ENCODE measurements at regions of chr3 and their contacts with region 1.

Region 1: DNA sequence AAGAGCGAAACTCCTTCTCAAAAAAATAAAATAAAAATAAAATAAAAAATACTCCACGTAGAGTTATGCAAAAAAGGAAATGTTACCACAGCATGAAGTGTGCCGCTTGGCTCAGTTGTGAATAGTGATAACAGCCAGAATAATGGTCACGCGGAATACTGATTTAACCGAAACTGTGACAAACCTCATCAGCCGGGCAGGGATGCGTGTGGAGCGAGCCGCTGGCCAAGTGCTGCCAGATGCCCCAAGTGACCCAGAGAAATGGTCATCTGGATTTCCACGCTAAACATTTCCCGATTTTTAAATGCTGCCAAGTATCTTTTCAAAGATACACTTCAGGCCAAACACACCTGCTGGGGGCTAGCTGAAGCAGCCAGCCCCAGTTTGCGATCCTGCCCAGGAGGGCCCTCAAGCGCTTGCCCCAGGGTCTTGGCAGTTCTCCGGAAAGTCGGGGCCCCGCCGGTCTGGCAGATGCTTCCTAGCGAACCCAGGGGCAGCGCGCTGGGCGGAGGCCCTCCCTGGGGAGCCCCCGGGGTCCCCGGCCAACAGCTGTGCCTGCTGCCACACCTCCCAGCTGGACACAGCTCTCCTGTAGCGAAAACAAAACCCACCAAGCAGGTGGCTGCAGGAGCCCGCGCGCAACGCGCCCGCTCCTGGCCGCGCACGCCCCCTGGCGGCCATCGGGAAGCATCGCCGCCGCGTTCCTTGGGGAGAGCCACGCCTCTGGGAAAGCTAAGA is 35.1 kb downstream of the CMTM6 start:
- DNase-seq: peak; percentile 70
- H3K4me3 Mint-ChIP-seq: no peak overlapping the region
- H3K27ac Mint-ChIP-seq: no peak overlapping the region
- H3K4me1 Mint-ChIP-seq: peaks cover 47% of the 10 kb centered on the region
- H3K27me3 Mint-ChIP-seq: no peaks in the 10 kb centered on the region

Region 2: DNA sequence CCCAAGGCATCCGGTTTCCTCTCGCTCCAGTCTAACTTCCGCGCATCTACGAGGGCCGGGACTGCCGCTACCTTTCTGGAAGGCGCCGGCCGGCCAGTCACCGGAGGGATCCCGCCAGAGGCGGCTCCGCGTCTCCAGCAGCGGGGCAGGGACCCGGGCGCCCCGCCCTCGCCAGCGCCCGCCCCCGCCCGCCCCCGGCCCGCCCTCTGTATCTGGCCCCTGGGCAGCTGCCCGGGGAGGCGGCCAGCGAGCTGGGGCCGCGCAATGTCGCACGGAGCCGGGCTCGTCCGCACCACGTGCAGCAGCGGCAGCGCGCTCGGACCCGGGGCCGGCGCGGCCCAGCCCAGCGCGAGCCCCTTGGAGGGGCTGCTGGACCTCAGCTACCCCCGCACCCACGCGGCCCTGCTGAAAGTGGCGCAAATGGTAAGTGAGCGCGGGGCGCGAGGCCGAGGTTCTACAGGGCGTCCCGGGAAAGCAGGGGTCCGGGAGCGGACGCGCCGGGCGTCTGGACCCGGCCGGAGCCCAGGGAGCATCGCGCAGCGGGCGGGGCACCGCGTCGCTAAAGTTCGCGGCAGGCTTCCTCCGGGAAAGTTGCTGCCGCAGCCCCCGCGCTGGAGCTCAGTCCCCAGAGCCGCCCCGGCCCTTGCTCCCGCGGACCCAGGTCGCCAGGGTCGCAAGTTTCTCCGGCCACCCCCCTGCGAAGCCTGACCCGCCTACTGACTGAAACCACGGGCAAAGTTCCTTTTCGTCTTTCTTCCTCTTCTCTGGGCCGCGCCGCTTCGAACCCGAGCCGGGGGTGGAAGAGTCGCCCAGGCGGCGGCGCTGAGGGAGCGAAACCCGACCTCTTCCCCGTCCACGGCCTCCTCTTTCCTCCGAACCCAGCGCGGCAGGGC is 75.6 kb before region 1 on chr3 and contains the start of gene CMTM7:
- CTCF ChIA-PET with region 1: interaction called, 10 read pairs
- POLR2A ChIA-PET with region 1: no interaction called
- DNase-seq: peak; percentile 75
- H3K4me3 Mint-ChIP-seq: peak within 1 kb of the TSS; percentile 94
- H3K27ac Mint-ChIP-seq: peak within 1 kb of the TSS; percentile 95
- H3K4me1 Mint-ChIP-seq: peaks cover 61% of the 10 kb centered on the region
- H3K27me3 Mint-ChIP-seq: no peaks in the 10 kb centered on the region
- total RNA-seq, gene CMTM7: 45.9 to 62.6 TPM

Region 3: DNA sequence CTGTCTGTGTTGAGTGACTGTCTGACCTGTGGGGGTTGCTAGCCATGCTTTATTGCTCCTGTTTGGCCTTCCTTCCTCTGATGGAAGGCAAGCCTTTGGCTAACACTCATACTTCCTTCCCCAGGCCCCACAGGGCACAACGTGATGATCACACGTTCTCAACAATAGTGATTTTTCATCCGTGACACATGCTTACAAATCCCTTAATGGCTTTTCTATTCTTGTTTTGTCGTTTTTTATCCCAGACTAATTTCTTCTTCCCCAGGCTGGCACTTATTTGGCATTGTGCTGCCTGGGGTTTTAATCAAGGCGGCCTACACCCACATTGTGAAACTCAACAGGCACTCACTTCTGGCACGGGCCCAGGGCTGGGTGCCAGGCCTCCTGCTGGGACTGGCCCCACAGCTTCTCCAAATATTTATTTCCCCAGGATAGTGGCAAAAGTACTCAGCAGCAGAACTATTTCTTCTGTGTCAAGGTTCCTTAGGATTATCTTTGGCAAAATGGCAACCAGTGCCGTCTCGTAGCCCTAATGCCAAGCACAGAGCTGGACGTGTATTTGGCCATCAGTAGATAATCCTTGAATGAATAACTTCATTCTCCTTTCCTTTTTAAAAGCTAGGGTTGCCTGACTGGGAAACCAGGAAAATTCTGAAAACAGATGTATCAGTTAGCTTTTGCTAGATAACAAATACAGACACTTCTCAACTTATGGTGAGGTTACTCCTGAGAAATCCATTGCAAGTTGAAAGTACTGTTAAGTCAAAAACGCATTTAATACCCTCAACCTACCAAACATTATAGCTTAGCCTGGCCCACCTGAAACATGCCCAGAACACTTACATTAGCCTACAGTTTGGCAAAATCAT is 45.3 kb before region 1 on chr3:
- CTCF ChIA-PET with region 1: interaction called, 10 read pairs
- POLR2A ChIA-PET with region 1: no interaction called
- DNase-seq: no peak
- H3K4me3 Mint-ChIP-seq: no peak overlapping the region
- H3K27ac Mint-ChIP-seq: peak overlapping the region; percentile 90
- H3K4me1 Mint-ChIP-seq: peaks cover 88% of the 10 kb centered on the region
- H3K27me3 Mint-ChIP-seq: no peaks in the 10 kb centered on the region

Measured in activated CD4-positive, alpha-beta T cell treated with anti-CD3 and anti-CD28 coated beads, Interleukin-2, amount 10 ng/mL, durations not matched to agents 7 days and 5 days (primary cell).